ENCODE measurements at regions of chr6 and their contacts with region 1.

Region 1: GRCh38 chr6:137589067-137589848 is 95.1 kb upstream of the OLIG3 start:
- DNase-seq: peak; percentile 77
- ATAC-seq: peak; percentile 100
- H3K4me3 Mint-ChIP-seq: no peak overlapping the region
- H3K27ac Mint-ChIP-seq: no peak overlapping the region
- H3K4me1 Mint-ChIP-seq: peaks cover 12% of the 10 kb centered on the region
- H3K27me3 Mint-ChIP-seq: peaks cover 12% of the 10 kb centered on the region

Region 2: GRCh38 chr6:137341681-137342195 is 247.5 kb before region 1 on chr6:
- CTCF ChIA-PET with region 1: interaction called, 19 read pairs
- POLR2A ChIA-PET with region 1: no interaction called
- DNase-seq: peak; percentile 58
- ATAC-seq: no peak
- H3K4me3 Mint-ChIP-seq: peak overlapping the region; percentile 66
- H3K27ac Mint-ChIP-seq: no peak overlapping the region
- H3K4me1 Mint-ChIP-seq: peaks cover 15% of the 10 kb centered on the region
- H3K27me3 Mint-ChIP-seq: peaks cover 26% of the 10 kb centered on the region

Region 3: GRCh38 chr6:137369136-137369535 is 220.1 kb before region 1 on chr6:
- CTCF ChIA-PET with region 1: no interaction called
- POLR2A ChIA-PET with region 1: no interaction called
- DNase-seq: no peak
- ATAC-seq: no peak
- H3K4me3 Mint-ChIP-seq: no peak overlapping the region
- H3K27ac Mint-ChIP-seq: no peak overlapping the region
- H3K4me1 Mint-ChIP-seq: peaks cover 3% of the 10 kb centered on the region
- H3K27me3 Mint-ChIP-seq: peaks cover 2% of the 10 kb centered on the region

Region 4: GRCh38 chr6:137415127-137415833 is 174.0 kb before region 1 on chr6:
- CTCF ChIA-PET with region 1: interaction called, 11 read pairs
- POLR2A ChIA-PET with region 1: no interaction called
- DNase-seq: peak; percentile 79
- ATAC-seq: peak; percentile 98
- H3K4me3 Mint-ChIP-seq: peak overlapping the region; percentile 73
- H3K27ac Mint-ChIP-seq: peak overlapping the region; percentile 22
- H3K4me1 Mint-ChIP-seq: peaks cover 9% of the 10 kb centered on the region
- H3K27me3 Mint-ChIP-seq: peaks cover 7% of the 10 kb centered on the region

Region 5: DNA sequence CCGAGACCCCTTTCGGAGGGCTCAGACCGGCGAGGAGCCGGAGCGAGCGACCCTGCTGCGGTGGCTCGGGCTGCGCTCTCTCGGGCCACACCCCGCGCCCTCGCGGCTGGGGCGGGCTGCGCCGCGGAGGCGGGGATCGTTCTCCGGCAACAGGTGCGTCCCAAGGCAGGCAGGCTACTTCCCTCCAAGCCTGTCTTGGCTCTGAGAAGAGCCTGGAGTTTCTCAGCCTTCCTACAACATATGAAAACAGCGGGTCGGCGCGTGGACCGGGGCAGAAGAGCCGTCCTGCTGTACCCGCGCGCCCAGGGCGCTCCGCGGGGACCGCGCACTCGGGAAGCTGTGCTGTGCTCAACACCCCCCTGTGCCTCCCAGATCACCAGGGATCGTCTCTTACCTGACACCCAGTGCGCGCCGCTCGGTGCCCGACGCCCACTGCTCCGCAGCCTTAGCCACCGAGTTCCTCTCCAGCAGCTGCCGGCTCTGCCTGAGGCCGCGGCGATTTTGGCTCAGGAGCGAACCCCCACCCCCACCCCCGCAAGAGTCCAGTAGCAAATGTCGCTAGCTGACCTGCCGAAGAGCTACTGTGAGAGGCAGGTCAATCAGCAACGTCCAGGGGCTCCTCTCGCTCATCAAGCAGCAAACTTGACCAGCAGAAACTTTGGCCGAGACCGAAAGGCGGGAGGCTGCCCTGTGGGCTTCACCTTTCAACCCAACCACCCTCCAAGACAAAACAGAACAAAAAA is 91.4 kb before region 1 on chr6:
- CTCF ChIA-PET with region 1: interaction called, 20 read pairs
- POLR2A ChIA-PET with region 1: no interaction called
- DNase-seq: no peak
- ATAC-seq: peak; percentile 56
- H3K4me3 Mint-ChIP-seq: peak overlapping the region; percentile 65
- H3K27ac Mint-ChIP-seq: no peak overlapping the region
- H3K4me1 Mint-ChIP-seq: peaks cover 42% of the 10 kb centered on the region
- H3K27me3 Mint-ChIP-seq: peaks cover 74% of the 10 kb centered on the region

Region 6: DNA sequence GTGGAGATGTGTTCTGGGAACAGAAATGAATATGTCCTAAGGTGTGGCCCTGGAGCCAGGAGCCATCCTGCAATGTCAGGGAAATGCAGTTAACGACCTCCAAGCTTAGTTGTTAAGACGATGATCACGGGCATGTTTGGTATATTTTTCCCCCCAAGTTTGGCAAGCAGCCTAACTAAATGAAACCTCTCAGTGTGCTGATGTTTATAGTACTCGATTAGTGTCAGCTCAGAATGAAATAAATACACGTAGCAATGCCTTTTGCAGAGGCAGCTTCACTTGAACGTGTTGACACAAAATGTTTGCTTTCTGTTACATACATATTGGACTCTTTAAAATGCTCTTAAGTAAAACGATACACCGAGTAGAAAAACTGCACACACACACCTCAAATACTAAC is 18.9 kb before region 1 on chr6:
- CTCF ChIA-PET with region 1: interaction called, 52 read pairs
- POLR2A ChIA-PET with region 1: no interaction called
- DNase-seq: no peak
- ATAC-seq: no peak
- H3K4me3 Mint-ChIP-seq: no peak overlapping the region
- H3K27ac Mint-ChIP-seq: no peak overlapping the region
- H3K4me1 Mint-ChIP-seq: peaks cover 4% of the 10 kb centered on the region
- H3K27me3 Mint-ChIP-seq: peaks cover 39% of the 10 kb centered on the region

Region 7: GRCh38 chr6:137610702-137611101 is 21.4 kb after region 1 on chr6:
- CTCF ChIA-PET with region 1: interaction called, 13 read pairs
- POLR2A ChIA-PET with region 1: no interaction called
- DNase-seq: no peak
- ATAC-seq: no peak
- H3K4me3 Mint-ChIP-seq: no peak overlapping the region
- H3K27ac Mint-ChIP-seq: no peak overlapping the region
- H3K4me1 Mint-ChIP-seq: no peaks in the 10 kb centered on the region
- H3K27me3 Mint-ChIP-seq: peaks cover 15% of the 10 kb centered on the region

Region 8: GRCh38 chr6:137651178-137651577 is 61.9 kb after region 1 on chr6:
- CTCF ChIA-PET with region 1: no interaction called
- POLR2A ChIA-PET with region 1: no interaction called
- DNase-seq: no peak
- ATAC-seq: no peak
- H3K4me3 Mint-ChIP-seq: no peak overlapping the region
- H3K27ac Mint-ChIP-seq: no peak overlapping the region
- H3K4me1 Mint-ChIP-seq: no peaks in the 10 kb centered on the region
- H3K27me3 Mint-ChIP-seq: peaks cover 3% of the 10 kb centered on the region